ENCODE measurements at regions of chr12 and their contacts with region 1.

Region 1: GRCh38 chr12:8687846-8688601 is 9.8 kb upstream of the RIMKLB start:
- DNase-seq: no peak
- H3K4me3 ChIP-seq: no peak overlapping the region
- H3K4me3 Mint-ChIP-seq: no peak overlapping the region
- H3K27ac ChIP-seq: peak overlapping the region in 1 of 2 donors; percentile 52
- H3K27ac Mint-ChIP-seq: no peak overlapping the region
- H3K4me1 ChIP-seq: peaks cover 19 to 20% of the 10 kb centered on the region in 2 donors
- H3K4me1 Mint-ChIP-seq: peaks cover 19% of the 10 kb centered on the region
- H3K27me3 ChIP-seq: no peaks in the 10 kb centered on the region
- H3K27me3 Mint-ChIP-seq: peaks cover 2 to 7% (median 4%) of the 10 kb centered on the region in 3 donors
- CTCF ChIP-seq: no peak

Region 2: DNA sequence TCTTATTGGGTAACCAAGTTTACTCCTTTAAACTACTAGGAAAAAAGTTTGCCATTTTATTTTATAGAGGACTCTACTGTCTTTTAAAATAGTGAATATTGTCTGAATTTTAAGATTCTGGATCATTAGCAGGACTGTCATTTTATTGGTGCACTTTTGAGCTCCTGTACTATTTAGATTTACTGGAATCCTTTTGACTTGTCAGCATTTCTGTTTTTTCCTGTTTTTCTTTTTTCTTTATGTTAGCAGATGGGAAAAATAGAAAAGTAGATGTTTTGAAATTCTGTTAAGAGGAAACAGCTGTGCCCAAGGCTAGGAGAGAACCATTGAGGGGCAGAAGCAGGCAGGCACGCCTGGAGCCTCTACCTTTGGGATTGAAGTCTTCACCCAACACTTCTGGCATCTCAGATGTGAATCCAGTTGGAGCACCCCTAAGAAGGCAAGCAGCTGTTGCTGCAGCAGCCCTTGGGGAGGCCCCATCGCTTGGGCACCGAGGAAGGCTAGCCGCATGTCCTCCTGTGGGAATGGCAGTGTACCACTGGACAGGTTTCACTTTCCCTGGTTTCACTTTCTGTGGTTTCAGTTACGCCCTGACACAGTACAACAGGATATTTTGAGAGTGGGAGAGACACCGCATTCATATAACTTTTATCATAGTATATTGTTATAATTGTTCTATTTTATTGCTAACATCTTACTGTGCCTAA is 21.3 kb after region 1 on chr12:
- intact Hi-C with region 1: no loop called
- DNase-seq: peak; percentile 22 to 54 (median 50)
- H3K4me3 ChIP-seq: peak overlapping the region; percentile 46 to 80 (median 57)
- H3K4me3 Mint-ChIP-seq: peak overlapping the region; percentile 85 to 94
- H3K27ac ChIP-seq: peak overlapping the region; percentile 26 to 82
- H3K27ac Mint-ChIP-seq: peak overlapping the region in 6 of 7 donors; percentile 24 to 82 (median 76)
- H3K4me1 ChIP-seq: peaks cover 4 to 16% of the 10 kb centered on the region in 2 donors
- H3K4me1 Mint-ChIP-seq: peaks cover 21% of the 10 kb centered on the region
- H3K27me3 ChIP-seq: no peaks in the 10 kb centered on the region
- H3K27me3 Mint-ChIP-seq: no peaks in the 10 kb centered on the region
- CTCF ChIP-seq: no peak

Region 3: GRCh38 chr12:8849876-8850275 is 161.9 kb after region 1 on chr12:
- intact Hi-C with region 1: loop called in 1 of 2 experiments (anchors 10 kb)
- DNase-seq: peak; percentile 31 to 63 (median 55)
- H3K4me3 ChIP-seq: no peak overlapping the region
- H3K4me3 Mint-ChIP-seq: no peak overlapping the region
- H3K27ac ChIP-seq: no peak overlapping the region
- H3K27ac Mint-ChIP-seq: peak overlapping the region in 2 of 7 donors; percentile 9 to 79
- H3K4me1 ChIP-seq: peaks cover 23 to 30% of the 10 kb centered on the region in 2 donors
- H3K4me1 Mint-ChIP-seq: peaks cover 27% of the 10 kb centered on the region
- H3K27me3 ChIP-seq: no peaks in the 10 kb centered on the region
- H3K27me3 Mint-ChIP-seq: peaks cover 1 to 7% (median 5%) of the 10 kb centered on the region in 3 donors
- CTCF ChIP-seq: no peak

Region 4: DNA sequence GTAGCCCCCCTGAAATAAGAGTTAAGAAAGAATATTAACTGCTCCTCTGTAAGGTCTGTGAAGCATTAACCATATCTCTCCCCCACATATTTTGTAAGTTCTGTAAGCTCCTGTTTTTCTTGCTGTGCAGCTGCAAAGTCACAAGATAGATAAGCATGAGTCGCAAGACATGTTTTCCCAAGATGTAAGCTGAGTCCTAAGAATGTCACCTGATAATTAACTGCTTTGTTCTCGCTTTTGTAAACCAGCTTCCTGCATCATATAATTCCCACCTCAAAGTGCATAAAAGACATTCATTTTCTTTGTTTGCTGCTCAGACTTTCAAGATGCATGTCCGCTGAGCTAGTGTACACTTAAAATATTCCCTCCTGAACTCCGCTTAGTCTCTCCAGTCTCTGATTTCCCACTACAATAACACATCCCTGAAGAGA is 199.3 kb after region 1 on chr12:
- intact Hi-C with region 1: loop called in 1 of 2 experiments (anchors 10 kb)
- DNase-seq: no peak
- H3K4me3 ChIP-seq: no peak overlapping the region
- H3K4me3 Mint-ChIP-seq: no peak overlapping the region
- H3K27ac ChIP-seq: no peak overlapping the region
- H3K27ac Mint-ChIP-seq: no peak overlapping the region
- H3K4me1 ChIP-seq: peaks cover 2 to 4% of the 10 kb centered on the region in 2 donors
- H3K4me1 Mint-ChIP-seq: peaks cover 5% of the 10 kb centered on the region
- H3K27me3 ChIP-seq: no peaks in the 10 kb centered on the region
- H3K27me3 Mint-ChIP-seq: peaks cover 1 to 4% (median 1%) of the 10 kb centered on the region in 3 donors
- CTCF ChIP-seq: no peak